A549 (cell line): ENCODE measurements at regions of chr9 and their contacts with region 1.

Region 1: GRCh38 chr9:21789541-21790037 is 12.8 kb upstream of the MTAP start:
- DNase-seq: peak; percentile 74 to 96
- ATAC-seq: peak; percentile 94 to 99
- H3K4me3 ChIP-seq: peak overlapping the region; percentile 27; the same call in 2 of the 3 replicates
- H3K27ac ChIP-seq: peak overlapping the region; percentile 65 to 76
- H3K4me1 ChIP-seq: peaks cover 15% of the 10 kb centered on the region
- CTCF ChIP-seq: peak; percentile 99
- EP300 ChIP-seq: no peak
- POLR2A ChIP-seq: no peak
- RAD21 ChIP-seq: peak; percentile 83 to 99

Region 2: GRCh38 chr9:21326526-21327139 is 463.0 kb before region 1 on chr9:
- CTCF ChIA-PET with region 1: interaction called, 16 read pairs
- POLR2A ChIA-PET with region 1: no interaction called
- DNase-seq: peak; percentile 40 to 42
- ATAC-seq: peak; percentile 88 to 91
- H3K4me3 ChIP-seq: no peak overlapping the region
- H3K27ac ChIP-seq: no peak overlapping the region
- H3K4me1 ChIP-seq: peaks cover 14% of the 10 kb centered on the region; the same call in 2 of the 3 replicates
- CTCF ChIP-seq: peak; percentile 84
- EP300 ChIP-seq: no peak
- POLR2A ChIP-seq: no peak
- RAD21 ChIP-seq: peak; percentile 81 to 85

Region 3: DNA sequence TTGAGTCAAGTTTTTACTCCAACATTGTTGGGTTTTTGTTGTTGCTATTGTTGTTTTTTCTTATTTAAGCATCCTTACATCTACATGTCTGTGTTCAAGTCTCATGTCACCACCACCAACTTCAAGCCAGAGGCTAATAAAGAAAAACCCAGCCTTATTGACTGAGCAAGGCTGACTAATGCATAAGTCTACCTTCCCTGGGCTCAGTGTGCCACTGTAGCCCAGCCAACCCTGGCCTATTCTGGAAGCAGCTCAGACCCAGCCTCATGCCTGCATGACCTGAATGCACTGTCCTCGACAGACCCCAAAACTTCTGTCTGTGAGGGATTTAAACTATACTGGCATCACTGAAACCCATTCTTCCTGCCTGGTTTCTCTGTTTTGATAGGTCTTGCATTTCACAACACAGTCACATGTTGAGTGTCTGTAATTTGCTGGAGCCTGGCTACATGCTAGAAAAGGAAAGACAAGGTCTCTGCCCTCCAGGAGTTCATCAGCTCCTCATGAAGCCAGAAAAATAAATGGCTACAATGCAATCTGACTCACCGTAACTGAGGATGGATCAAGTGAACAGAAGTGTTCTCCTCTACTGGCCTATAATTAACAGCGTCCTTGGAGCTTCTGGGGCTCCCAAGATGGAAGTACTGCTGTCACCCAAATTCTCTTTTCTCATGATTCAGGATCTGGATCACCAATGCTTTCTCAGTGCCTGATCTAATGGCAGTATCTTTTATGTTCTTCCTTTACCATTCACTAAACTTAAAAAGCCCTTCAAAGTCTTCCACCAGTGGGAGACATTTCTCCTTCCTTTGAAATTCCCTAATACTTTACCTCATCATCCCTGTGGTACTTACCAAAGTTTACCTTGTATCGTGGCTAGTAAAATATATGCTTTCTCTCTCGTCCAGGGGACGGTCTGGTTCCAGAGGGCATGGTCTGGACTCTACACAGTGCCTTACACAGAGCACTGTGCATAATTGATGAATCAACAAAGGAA is 203.5 kb before region 1 on chr9:
- CTCF ChIA-PET with region 1: interaction called, 11 read pairs
- POLR2A ChIA-PET with region 1: no interaction called
- DNase-seq: peak in 1 of 2 experiments; percentile 63
- ATAC-seq: peak in 1 of 2 experiments; percentile 4; a peak in 1 of 6 replicates
- H3K4me3 ChIP-seq: no peak overlapping the region; the same call in 2 of the 3 replicates
- H3K27ac ChIP-seq: peak overlapping the region; percentile 93 to 97
- H3K4me1 ChIP-seq: peaks cover 86% of the 10 kb centered on the region
- CTCF ChIP-seq: peak; percentile 57
- EP300 ChIP-seq: no peak
- POLR2A ChIP-seq: no peak
- RAD21 ChIP-seq: peak; percentile 57 to 63

Region 4: DNA sequence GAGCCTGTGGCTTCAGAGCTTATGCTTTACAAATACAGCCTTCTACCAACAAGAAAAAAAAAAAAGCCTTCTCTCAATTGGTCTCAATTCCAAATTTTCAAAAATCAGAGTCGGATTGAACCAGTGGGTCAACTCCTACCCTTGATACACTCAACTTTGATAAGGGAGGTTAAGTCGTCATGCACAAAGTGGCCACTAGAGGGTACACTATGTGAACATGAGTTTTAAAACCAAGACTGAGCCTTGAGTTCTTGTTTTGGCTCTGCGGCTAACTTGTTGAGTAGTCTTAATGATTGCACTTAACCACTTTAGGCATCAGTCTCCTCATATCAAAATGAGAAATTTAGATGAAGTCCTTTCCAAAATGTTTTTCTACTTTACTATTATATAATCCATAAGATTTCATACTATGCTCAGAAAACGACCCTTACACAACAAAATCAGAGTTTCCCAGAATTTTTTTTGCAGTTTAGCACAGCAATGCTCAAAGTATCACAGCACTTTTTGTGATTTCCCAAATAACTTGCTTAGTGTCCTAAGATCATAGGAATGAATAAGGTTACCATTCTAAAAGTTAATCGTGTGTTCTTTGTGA is 80.0 kb before region 1 on chr9:
- CTCF ChIA-PET with region 1: interaction called, 14 read pairs
- POLR2A ChIA-PET with region 1: no interaction called
- DNase-seq: peak; percentile 36 to 74
- ATAC-seq: peak; percentile 66 to 85; a peak in 4 of 6 replicates
- H3K4me3 ChIP-seq: no peak overlapping the region
- H3K27ac ChIP-seq: peak overlapping the region in 1 of 2 experiments; percentile 64; a peak in 2 of 6 replicates
- H3K4me1 ChIP-seq: peaks cover 18% of the 10 kb centered on the region; the same call in 2 of the 3 replicates
- CTCF ChIP-seq: peak; percentile 74
- EP300 ChIP-seq: no peak
- POLR2A ChIP-seq: no peak
- RAD21 ChIP-seq: peak; percentile 50 to 55

Region 5: GRCh38 chr9:21802195-21803000 is 12.8 kb after region 1 on chr9 and contains the start of gene MTAP:
- CTCF ChIA-PET with region 1: interaction called, 10 read pairs
- POLR2A ChIA-PET with region 1: no interaction called
- DNase-seq: peak; percentile 89 to 94
- ATAC-seq: peak; percentile 97 to 98
- H3K4me3 ChIP-seq: peak within 1 kb of the TSS; percentile 69
- H3K27ac ChIP-seq: peak within 1 kb of the TSS; percentile 87 to 95
- H3K4me1 ChIP-seq: peaks cover 41% of the 10 kb centered on the region
- CTCF ChIP-seq: no peak
- EP300 ChIP-seq: no peak
- POLR2A ChIP-seq: peak; percentile 97
- RAD21 ChIP-seq: peak in 1 of 2 experiments; percentile 9; a peak in 1 of 5 replicates
- polyA plus RNA-seq, gene MTAP: 2.4 and 4.1 TPM in 2 replicates